ENCODE measurements at regions of chr12 and their contacts with region 1.

Region 1: DNA sequence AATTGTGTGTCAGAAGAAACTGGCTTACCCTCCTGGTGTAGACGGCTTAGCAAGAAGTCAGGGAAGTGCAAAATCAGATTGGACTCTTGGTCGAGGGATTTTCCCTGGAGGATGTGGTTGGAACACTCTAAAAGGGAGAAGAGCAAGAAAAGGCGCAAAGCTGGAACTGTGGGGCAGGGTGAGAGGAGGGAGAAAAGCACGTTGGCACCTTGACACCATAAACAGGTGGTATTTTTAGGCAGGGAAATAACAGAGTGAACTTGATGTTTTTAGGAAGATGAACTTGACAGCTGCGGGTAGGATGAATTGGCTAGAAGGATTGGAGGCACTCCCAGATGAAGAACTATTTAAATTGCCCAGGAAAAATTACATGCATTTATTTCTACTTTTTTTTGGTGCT is 67.7 kb downstream of the HCAR2 start:
- DNase-seq: no peak
- H3K4me3 ChIP-seq: no peak overlapping the region
- H3K27ac ChIP-seq: no peak overlapping the region
- H3K4me1 ChIP-seq: peaks cover 0 to 5% (median 0%) of the 10 kb centered on the region in 6 donors
- H3K27me3 ChIP-seq: no peaks in the 10 kb centered on the region
- CTCF ChIP-seq: no peak
- POLR2A ChIP-seq: no peak

Region 2: DNA sequence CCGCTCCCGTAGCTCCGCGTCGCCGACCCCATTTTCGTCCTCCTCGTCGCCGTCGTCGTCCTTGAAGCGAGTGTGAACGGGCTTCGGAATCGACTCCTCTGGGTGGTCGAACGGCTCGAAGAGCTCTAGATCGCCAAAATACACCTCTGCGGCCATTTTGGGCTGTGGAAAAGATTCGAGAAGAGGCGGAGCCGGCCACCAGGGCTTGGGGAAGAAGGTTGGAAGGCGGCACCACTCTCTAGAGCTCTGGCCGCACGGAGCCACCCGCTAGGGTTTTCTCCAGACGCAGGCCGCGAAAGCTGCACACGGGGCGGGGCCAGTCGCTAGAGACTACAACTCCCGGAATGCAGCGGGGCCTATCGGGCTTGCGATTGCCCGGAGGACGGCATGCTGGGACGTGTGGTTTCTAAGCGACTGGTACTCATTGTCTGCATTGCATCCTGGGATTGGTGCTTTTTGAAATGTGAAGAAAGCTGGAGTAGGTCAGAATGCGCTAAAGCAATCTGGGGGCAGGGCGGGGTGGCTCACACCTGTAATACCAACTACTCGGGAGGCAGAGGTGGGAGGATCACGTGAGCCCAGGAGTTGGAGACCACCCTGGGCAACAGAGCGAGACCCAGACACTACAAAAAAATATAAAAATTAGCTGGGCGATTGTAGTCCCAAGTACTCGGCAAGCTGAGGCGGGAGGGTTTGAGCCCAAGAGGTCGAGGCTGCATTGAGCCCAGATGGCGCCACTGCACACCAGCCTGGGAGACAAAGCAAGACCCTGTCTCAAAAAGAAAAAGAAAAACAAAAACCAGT is 134.6 kb before region 1 on chr12 and contains the start of gene ZCCHC8:
- intact Hi-C with region 1: no loop called
- DNase-seq: peak; percentile 99
- H3K4me3 ChIP-seq: peak within 1 kb of the TSS; percentile 61 to 85 (median 76)
- H3K27ac ChIP-seq: peak within 1 kb of the TSS; percentile 90 to 99 (median 98)
- H3K4me1 ChIP-seq: peaks cover 26 to 65% (median 53%) of the 10 kb centered on the region in 6 donors
- H3K27me3 ChIP-seq: no peaks in the 10 kb centered on the region
- CTCF ChIP-seq: peak in 8 of 11 experiments; percentile 19 to 59 (median 42)
- POLR2A ChIP-seq: peak; percentile 59 to 97 (median 89)
- total RNA-seq, gene ZCCHC8: 28.2 to 37.1 (median 31.1) TPM

Region 3: DNA sequence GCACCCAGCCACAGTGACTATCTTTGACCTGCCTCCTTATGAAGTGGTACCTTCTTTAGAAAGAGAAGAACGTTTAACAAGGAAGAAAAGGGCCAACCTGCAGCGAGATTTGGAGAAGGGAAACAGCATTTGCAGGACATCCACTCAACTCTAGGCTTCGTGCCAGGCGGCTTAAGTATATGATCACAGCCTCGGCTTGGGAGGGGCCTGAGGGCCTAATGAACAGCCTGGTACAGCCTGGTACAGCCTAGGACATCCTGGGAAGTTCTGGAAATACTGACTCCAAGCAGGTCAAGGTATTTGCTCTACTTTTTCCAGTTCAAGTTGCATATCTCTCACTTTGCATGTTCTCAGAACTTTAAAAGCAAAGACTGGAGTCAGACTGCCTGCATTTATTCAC is 51.6 kb after region 1 on chr12:
- intact Hi-C with region 1: no loop called
- DNase-seq: no peak
- H3K4me3 ChIP-seq: no peak overlapping the region
- H3K27ac ChIP-seq: no peak overlapping the region
- H3K4me1 ChIP-seq: peaks cover 0 to 20% (median 0%) of the 10 kb centered on the region in 6 donors
- H3K27me3 ChIP-seq: no peaks in the 10 kb centered on the region
- CTCF ChIP-seq: no peak
- POLR2A ChIP-seq: no peak

Region 4: DNA sequence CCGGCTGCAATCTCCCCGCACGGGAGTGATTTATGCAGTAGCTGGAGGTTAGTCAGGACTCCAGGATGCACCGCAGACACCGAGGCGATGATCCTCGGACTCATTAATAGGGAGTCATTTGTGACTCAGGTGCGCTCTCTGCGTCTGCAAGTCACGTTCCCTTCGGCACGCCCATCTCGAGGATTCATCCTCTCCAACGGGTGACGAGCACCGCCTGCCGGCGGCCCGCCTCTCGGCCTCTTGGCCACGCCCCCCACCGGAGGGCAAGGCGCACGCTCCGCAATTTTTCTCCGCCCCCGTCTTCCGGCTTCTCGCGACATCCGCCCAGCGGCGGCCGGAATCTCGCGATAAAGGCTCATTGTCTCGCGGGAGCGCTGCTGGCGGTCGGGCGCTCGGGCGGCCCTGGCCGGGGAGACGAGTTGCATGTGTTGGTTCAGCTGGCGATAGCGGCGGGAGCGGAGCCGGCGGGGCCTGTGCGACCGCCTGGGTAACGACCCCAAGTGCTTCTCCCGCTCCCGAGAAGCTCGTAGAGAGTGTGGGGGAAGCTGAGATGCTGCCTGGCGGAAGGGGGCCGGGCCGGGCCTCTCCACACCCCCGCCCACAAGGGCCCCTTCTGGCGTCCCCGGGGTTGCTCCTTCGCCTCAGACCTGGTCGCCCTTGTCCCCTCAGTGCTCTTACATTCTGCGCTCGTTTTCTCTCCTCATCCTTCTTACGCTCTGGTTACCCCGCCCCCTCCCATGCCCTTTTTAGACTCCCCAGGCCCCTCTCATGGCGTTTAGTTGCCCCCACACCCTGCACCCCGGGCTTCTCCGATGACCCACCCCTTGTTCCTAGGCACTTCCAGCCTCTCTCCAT is 117.2 kb after region 1 on chr12 and contains the start of gene DENR:
- intact Hi-C with region 1: loop called (anchors 5 kb)
- DNase-seq: peak; percentile 100
- H3K4me3 ChIP-seq: peak within 1 kb of the TSS; percentile 45 to 94 (median 80)
- H3K27ac ChIP-seq: peak within 1 kb of the TSS; percentile 73 to 97 (median 90)
- H3K4me1 ChIP-seq: peaks cover 9 to 78% (median 30%) of the 10 kb centered on the region in 6 donors
- H3K27me3 ChIP-seq: peaks cover 0 to 3% (median 0%) of the 10 kb centered on the region in 7 donors
- CTCF ChIP-seq: peak; percentile 89 to 99 (median 98)
- POLR2A ChIP-seq: peak; percentile 53 to 81 (median 54)
- total RNA-seq, gene DENR: 29.0 to 41.7 (median 38.5) TPM

Region 5: GRCh38 chr12:122860346-122861090 is 225.0 kb after region 1 on chr12:
- intact Hi-C with region 1: no loop called
- DNase-seq: peak; percentile 96
- H3K4me3 ChIP-seq: no peak overlapping the region
- H3K27ac ChIP-seq: peak overlapping the region in 4 of 8 donors; percentile 29 to 74 (median 46)
- H3K4me1 ChIP-seq: peaks cover 16 to 57% (median 36%) of the 10 kb centered on the region in 6 donors
- H3K27me3 ChIP-seq: no peaks in the 10 kb centered on the region
- CTCF ChIP-seq: peak; percentile 87 to 97 (median 94)
- POLR2A ChIP-seq: no peak

Measured in spleen (tissue), 13 donors.